AG04450 (cell line): ENCODE measurements at regions of chr13 and their contacts with region 1.

Region 1: GRCh38 chr13:41470196-41470595 is 12.8 kb downstream of the RGCC start:
- DNase-seq: no peak
- H3K4me3 ChIP-seq: no peak overlapping the region
- H3K27ac ChIP-seq: no peak overlapping the region
- H3K27me3 ChIP-seq: no peaks in the 10 kb centered on the region
- CTCF ChIP-seq: no peak

Region 2: DNA sequence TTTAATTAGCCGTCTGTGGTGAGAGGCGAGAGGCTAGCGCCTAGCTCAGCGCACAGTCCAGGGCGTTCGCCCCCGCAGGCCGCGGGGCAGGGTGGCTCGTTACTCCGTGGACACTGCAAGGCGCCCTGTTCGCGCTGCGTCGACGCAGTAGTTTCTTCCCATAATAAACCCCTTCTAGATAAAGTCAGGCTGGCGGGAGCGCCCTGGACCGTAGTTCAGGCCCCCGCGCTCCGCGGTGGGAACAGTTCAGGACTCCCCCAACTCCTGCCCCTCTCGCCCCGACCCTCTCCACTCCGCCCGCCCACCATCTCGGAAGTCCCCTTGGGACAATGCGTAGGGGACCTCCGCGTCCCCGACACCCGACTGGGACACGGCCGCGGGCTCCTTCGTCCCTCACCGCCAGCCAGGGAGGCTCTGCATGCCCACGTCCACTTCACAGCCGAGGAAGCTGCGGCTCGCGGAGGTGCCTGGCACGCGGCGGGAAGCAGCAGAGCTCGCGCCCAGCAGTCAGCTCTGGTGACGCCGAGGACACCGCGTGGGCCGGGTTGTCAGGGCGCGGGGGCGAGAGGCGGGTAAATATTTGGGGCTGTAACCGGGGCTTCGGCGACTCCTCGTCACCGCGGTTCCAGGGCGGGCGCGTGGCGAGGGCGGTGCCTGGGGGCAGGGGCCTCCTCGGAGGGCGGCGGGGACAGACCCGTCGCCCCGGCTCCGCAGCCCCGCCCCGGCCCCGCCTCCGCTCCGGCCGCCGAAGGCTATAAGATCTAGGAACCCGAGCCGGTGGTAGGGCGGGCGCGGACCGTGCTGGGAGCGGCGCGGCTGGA is 13.2 kb before region 1 on chr13 and contains the start of gene RGCC:
- CTCF ChIA-PET with region 1: interaction called, 11 read pairs
- POLR2A ChIA-PET with region 1: interaction called, 3 read pairs
- DNase-seq: no peak
- H3K4me3 ChIP-seq: peak within 1 kb of the TSS; percentile 84
- H3K27ac ChIP-seq: no peak within 1 kb of the TSS
- H3K27me3 ChIP-seq: peaks cover 20% of the 10 kb centered on the region
- CTCF ChIP-seq: no peak
- polyA plus RNA-seq, gene RGCC: 141 TPM in 2 replicates

Region 3: DNA sequence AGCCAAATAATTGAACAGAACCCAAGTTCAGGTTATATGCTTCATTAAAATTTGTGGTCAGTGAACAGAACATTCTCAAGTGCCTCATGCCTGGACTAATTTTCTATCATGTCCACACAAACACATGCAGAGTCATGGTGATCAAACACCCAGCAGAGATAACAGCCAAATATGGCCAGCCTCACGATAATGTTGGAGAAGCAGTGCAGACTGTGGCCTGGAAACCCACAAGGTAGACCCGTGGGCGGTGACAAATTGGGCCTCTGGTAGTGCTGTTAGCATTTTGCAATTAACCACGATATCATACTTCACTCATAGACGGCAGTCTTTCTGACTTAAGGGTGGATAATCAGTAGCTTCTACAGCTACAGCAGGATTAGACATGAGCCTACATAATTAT is 525.8 kb after region 1 on chr13:
- CTCF ChIA-PET with region 1: no interaction called
- POLR2A ChIA-PET with region 1: no interaction called
- DNase-seq: no peak
- H3K4me3 ChIP-seq: no peak overlapping the region
- H3K27ac ChIP-seq: no peak overlapping the region
- H3K27me3 ChIP-seq: no peaks in the 10 kb centered on the region
- CTCF ChIP-seq: no peak